ENCODE measurements at regions of chr2 and their contacts with region 1.

Region 1: GRCh38 chr2:11688222-11689069 is 18.5 kb upstream of the NTSR2 start:
- DNase-seq: peak; percentile 87 to 91 (median 89)
- H3K4me3 ChIP-seq: peak overlapping the region; percentile 4
- H3K27ac ChIP-seq: peak overlapping the region; percentile 57 to 69
- H3K4me1 ChIP-seq: peaks cover 13% of the 10 kb centered on the region
- H3K27me3 ChIP-seq: no peaks in the 10 kb centered on the region
- CTCF ChIP-seq: peak; percentile 85 to 88 (median 87)
- EP300 ChIP-seq: no peak
- POLR2A ChIP-seq: no peak

Region 2: GRCh38 chr2:11656668-11657101 is 31.8 kb before region 1 on chr2:
- intact Hi-C with region 1: no loop called
- DNase-seq: peak in 2 of 5 donors; percentile 53 to 71
- H3K4me3 ChIP-seq: no peak overlapping the region
- H3K27ac ChIP-seq: no peak overlapping the region
- H3K4me1 ChIP-seq: peaks cover 6% of the 10 kb centered on the region
- H3K27me3 ChIP-seq: no peaks in the 10 kb centered on the region
- CTCF ChIP-seq: no peak
- EP300 ChIP-seq: no peak
- POLR2A ChIP-seq: no peak

Region 3: DNA sequence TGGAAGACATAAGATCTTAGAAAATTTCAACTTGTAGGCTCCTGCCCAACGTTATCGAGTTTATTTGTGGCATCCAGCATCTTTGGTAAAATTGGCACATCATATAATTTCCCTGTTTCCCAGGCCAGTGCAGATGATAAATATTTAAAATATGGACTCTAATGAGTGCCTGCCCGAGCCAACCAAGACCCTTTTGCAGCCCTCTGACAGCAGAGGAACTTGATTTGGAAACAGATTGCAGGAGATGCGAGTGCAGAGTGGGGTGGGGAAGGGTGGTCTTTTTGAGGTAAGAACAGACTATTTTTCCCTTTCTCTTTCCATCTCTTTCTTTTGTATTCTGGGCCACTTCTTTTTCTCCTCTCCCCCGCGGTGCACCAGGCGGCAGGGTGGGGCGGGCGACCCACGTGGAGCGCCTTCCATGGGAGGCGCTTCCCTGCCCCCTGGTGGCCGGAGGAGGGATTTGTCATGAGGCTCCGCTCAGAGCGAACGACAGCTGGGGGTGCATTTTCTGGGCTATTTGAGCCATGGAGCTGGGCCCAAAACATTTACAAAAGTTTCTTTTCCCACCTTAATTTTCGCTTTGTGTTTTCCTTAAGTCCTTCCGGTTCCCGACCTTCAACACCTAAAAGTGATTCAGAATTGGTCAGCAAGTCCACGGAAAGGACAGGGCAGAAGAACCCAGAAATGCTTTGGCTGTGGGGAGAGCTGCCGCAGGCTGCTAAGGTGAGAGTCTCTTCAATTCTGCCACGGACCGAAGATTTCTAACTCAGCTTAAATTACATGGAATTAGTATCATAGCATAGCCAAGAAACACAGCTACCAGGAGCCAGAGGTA is 90.7 kb after region 1 on chr2:
- intact Hi-C with region 1: loop called (anchors 1 to 5 kb)
- DNase-seq: peak; percentile 80 to 90 (median 88)
- H3K4me3 ChIP-seq: no peak overlapping the region
- H3K27ac ChIP-seq: no peak overlapping the region
- H3K4me1 ChIP-seq: no peaks in the 10 kb centered on the region
- H3K27me3 ChIP-seq: no peaks in the 10 kb centered on the region
- CTCF ChIP-seq: peak; percentile 89 to 98 (median 97)
- EP300 ChIP-seq: no peak
- POLR2A ChIP-seq: no peak

Region 4: GRCh38 chr2:11784747-11785610 is 96.5 kb after region 1 on chr2:
- intact Hi-C with region 1: loop called in 1 of 4 experiments (anchors 5 kb)
- DNase-seq: peak in 4 of 5 donors; percentile 49 to 71 (median 63)
- H3K4me3 ChIP-seq: no peak overlapping the region
- H3K27ac ChIP-seq: peak overlapping the region in 1 of 2 donors; percentile 6
- H3K4me1 ChIP-seq: no peaks in the 10 kb centered on the region
- H3K27me3 ChIP-seq: no peaks in the 10 kb centered on the region
- CTCF ChIP-seq: peak; percentile 76 to 79 (median 78)
- EP300 ChIP-seq: no peak
- POLR2A ChIP-seq: no peak

Measured in ovary (tissue), 10 donors.